ENCODE measurements at regions of chr7 and their contacts with region 1.

Region 1: GRCh38 chr7:102147008-102147407 is 139.7 kb upstream of the SH2B2 start:
- DNase-seq: peak; percentile 85 to 89
- ATAC-seq: peak; percentile 82 to 84
- H3K4me3 ChIP-seq: peak overlapping the region in 1 of 4 donors; percentile 8
- H3K27ac ChIP-seq: peak overlapping the region; percentile 95 to 99 (median 97)
- H3K4me1 ChIP-seq: peaks cover 14 to 24% of the 10 kb centered on the region in 2 donors
- H3K27me3 ChIP-seq: no peaks in the 10 kb centered on the region
- CTCF ChIP-seq: no peak
- POLR2A ChIP-seq: no peak

Region 2: DNA sequence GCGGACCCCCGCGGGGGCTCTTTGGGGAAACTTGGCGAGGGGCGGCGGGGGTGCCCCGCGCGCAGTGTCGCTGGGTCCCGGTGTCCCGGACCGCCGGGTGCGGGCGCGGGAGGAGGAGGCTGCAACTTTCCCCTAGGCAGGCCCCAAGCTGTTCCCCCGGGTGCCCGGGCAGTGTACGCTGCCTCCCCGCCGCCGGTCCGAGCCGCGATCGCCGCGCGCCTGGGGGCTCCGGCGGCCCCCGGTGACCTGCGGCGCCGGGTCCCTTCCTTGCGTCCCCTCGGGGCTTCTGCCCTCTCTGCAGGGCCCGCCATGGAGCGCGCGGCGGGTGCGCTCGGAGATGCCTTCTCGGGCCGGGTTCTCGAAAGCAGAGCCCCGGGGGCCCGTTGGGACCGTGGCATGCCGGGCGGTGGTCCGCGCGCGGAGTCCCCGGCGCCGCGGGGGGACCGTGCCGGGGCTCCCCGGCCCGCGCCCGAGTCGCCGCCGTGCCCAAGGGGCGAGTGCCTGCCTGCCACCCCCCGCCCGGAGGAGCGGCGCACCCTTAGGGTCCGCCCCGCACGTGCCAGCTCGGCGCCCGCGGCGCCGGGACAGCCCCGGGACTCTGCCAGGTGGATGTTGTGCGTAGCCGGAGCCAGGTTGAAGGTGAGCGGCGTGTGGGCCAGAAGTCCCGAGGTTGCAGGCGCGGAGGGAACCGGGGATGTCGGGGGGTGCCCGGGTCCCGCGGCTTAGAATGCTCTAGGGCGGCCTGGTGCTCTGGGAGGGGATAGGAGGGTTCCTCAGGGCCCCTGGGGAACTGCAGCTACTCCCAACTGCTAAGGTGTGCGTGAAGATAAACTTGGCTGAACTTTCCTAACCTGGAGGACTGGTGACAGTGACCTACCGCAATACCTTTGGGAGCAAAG is 329.7 kb before region 1 on chr7 and contains the start of gene CUX1:
- in situ Hi-C with region 1: no loop called
- intact Hi-C with region 1: no loop called
- DNase-seq: peak in 1 of 2 donors; percentile 30
- ATAC-seq: peak; percentile 30 to 36
- H3K4me3 ChIP-seq: peak within 1 kb of the TSS; percentile 62 to 86 (median 74)
- H3K27ac ChIP-seq: peak within 1 kb of the TSS; percentile 74 to 84 (median 80)
- H3K4me1 ChIP-seq: peaks cover 23 to 28% of the 10 kb centered on the region in 2 donors
- H3K27me3 ChIP-seq: no peaks in the 10 kb centered on the region
- CTCF ChIP-seq: peak in 2 of 5 experiments; percentile 6 to 28
- POLR2A ChIP-seq: no peak
- total RNA-seq, gene CUX1: 44.1 to 57.9 (median 54.9) TPM

Region 3: DNA sequence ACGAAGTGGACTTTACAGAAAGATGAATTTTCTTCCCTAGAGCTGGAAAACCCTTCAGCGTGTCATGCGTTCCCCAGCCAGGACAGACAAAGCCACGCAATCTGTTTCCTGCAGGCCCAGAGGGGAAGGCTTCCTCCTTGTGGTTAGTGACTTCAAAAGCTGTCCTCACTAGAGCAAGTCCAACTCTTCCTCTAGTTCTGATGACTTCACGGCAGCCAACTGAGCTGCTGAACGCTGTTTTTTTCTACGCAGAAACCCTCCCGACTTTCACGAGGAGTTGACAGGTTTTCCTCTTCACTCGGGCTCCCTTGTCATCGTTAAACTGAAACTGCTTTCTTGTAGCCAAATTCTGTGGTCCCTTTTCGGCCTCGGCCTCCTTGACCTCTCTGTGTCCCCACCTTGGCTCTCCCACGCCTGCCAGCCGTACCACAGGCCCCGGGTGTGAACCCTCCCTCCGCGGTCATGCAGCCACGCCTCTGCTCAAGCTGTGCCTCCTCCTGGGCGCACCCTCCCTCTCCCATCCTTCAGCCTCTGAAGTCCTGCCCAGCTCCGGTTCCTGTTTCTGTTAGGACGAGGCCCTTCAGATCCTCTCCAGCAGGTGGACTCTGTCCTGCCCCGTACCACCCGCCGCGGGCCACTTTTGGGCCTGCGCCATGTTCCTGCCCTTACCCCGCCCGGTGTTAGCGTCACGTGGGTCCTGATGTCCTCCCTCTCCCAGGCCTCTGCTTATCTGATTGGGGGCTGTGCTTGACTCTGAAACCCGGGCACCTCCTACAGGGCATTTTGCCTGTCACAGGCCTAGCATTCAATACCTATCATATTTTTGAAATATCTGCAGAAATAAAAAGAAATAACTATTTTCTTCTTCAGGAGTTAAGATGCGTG is 290.3 kb before region 1 on chr7:
- in situ Hi-C with region 1: no loop called
- intact Hi-C with region 1: loop called (anchors 5 kb)
- DNase-seq: peak; percentile 87 to 95
- ATAC-seq: peak; percentile 84 to 88
- H3K4me3 ChIP-seq: peak overlapping the region; percentile 30 to 53 (median 46)
- H3K27ac ChIP-seq: peak overlapping the region; percentile 84 to 93 (median 91)
- H3K4me1 ChIP-seq: peaks cover 57 to 64% of the 10 kb centered on the region in 2 donors
- H3K27me3 ChIP-seq: no peaks in the 10 kb centered on the region
- CTCF ChIP-seq: peak; percentile 51 to 77 (median 76)
- POLR2A ChIP-seq: peak; percentile 31 to 59

Region 4: DNA sequence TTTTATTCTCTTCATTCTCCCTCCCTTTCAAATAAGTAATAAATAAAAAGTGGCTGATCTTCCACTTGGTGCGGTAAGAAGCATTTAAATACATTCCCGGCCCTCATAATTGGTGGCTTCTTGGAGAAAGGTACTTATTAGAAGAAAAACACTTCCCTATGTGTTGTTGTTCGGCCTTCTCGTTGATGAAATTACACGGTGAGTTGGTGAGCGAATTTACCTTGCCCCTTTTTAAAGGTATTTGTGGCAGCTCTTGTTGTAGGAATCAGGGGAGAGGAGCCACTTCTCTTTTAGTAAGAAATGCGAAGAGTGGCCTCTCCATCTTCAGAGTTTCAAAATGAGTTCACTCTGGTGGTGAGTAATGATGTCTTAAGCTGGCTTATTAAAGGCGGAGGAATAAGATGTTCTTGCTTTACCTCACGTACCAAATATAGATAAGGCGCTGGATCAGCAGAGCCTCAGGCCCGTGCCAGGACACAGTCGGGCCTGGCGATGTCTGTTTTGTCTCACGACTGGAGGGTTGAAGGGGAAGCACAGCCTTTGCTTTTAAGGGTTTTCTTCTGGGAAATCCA is 193.7 kb before region 1 on chr7:
- in situ Hi-C with region 1: no loop called
- intact Hi-C with region 1: loop called (anchors 5 kb)
- DNase-seq: peak; percentile 76 to 86
- ATAC-seq: peak; percentile 85 to 91
- H3K4me3 ChIP-seq: no peak overlapping the region
- H3K27ac ChIP-seq: peak overlapping the region; percentile 89 to 96 (median 94)
- H3K4me1 ChIP-seq: peaks cover 72 to 73% of the 10 kb centered on the region in 2 donors
- H3K27me3 ChIP-seq: no peaks in the 10 kb centered on the region
- CTCF ChIP-seq: peak in 3 of 5 experiments; percentile 6 to 20 (median 13)
- POLR2A ChIP-seq: peak; percentile 63 to 82

Region 5: DNA sequence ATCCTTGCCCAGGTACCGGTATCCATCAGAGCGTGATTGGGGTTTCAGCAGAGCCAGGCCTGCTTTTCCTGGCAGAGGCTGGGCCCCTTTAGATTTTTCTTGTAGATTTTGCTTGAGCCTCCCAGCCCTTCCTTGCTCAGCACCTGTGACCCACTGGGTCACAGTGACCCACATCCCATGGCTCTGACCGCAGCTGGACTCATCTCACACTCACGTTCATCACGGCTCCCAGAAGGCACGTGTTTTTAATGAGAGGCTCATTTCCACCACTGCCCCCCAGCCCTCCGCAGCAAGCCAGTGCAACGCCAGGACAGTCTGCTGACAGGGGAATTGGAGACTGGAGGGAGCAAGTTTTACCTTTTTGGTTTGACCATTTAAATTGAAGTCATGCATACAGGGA is 173.9 kb before region 1 on chr7:
- in situ Hi-C with region 1: no loop called
- intact Hi-C with region 1: loop called (anchors 5 kb)
- DNase-seq: peak in 1 of 2 donors; percentile 17
- ATAC-seq: peak; percentile 26 to 58
- H3K4me3 ChIP-seq: no peak overlapping the region
- H3K27ac ChIP-seq: peak overlapping the region; percentile 79 to 84 (median 81)
- H3K4me1 ChIP-seq: peaks cover 28 to 30% of the 10 kb centered on the region in 2 donors
- H3K27me3 ChIP-seq: no peaks in the 10 kb centered on the region
- CTCF ChIP-seq: no peak
- POLR2A ChIP-seq: no peak

Region 6: DNA sequence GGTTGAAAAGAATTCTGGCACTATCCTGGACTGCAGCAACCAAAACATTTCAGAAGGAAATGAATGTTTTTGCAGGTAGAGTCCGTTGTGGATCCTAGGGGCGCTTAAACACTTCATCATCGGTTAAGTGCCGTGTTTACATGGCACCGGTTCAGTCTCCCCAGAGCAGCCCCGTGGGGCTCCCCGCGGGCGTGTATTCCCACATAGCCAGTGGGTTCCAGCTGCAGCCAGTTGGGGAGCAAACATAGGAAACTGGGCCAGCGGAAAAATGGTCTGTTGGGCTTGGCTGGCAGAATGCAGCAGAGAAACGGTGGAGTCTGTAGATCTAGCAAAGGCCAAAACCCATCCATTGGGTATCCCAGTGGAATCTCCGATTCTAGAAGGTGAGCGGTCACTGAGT is 26.7 kb after region 1 on chr7:
- in situ Hi-C with region 1: no loop called
- intact Hi-C with region 1: loop called (anchors 2 kb)
- DNase-seq: no peak
- ATAC-seq: no peak
- H3K4me3 ChIP-seq: no peak overlapping the region
- H3K27ac ChIP-seq: peak overlapping the region in 2 of 4 donors; percentile 71 to 85
- H3K4me1 ChIP-seq: peaks cover 14 to 27% of the 10 kb centered on the region in 2 donors
- H3K27me3 ChIP-seq: no peaks in the 10 kb centered on the region
- CTCF ChIP-seq: no peak
- POLR2A ChIP-seq: no peak

Measured in gastrocnemius medialis (tissue), 4 donors.